Naive thymus-derived CD8-positive, alpha-beta T cell (primary cell): ENCODE measurements at regions of chr2 and their contacts with region 1.

Region 1: DNA sequence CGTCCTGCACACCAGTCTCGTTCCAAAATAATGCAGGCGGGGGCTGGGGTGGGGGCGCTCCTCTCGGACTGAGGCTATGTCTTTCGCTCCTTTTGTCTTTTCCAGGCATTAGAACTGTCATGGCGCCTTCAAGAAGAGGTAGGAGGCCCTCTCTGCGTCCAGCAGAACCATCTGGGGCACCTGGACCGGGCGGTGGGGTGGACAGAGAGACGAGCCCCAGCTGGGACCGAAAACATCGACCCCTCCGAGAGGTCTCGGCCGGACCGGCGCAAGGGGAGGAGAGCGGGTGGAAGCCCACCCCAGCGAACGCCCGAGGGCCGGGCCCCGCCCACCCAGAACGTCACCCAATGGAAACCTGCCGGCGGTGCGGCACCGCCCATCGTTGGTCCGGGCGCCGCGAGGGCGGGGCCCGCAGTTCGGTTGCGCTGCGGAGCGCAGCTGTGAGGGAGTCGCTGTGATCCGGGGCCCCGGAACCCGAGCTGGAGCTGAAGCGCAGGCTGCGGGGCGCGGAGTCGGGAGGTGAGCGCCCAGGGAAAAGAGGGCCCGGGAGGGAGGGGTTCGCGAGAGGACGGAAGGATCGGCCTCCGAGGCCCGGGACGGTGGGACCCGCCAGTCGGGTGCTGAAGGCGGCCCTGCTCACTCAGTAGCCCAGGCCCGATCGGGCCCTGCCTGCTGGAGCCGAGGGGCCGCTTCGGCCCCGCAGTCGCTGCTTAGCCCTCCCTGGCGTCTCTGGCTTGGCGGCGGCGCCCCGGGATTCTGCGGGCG is at the start of gene NRBP1:
- DNase-seq: peak; percentile 81 to 93 (median 90)
- ATAC-seq: peak; percentile 92 to 94
- H3K4me3 Mint-ChIP-seq: peak within 1 kb of the TSS; percentile 95 to 100 (median 98)
- H3K27ac Mint-ChIP-seq: peak within 1 kb of the TSS; percentile 94 to 99 (median 98)
- H3K4me1 Mint-ChIP-seq: peaks cover 22 to 45% (median 43%) of the 10 kb centered on the region in 4 donors
- H3K27me3 Mint-ChIP-seq: no peaks in the 10 kb centered on the region
- polyA plus RNA-seq, gene NRBP1: 73.4 to 107 (median 78.8) TPM

Region 2: DNA sequence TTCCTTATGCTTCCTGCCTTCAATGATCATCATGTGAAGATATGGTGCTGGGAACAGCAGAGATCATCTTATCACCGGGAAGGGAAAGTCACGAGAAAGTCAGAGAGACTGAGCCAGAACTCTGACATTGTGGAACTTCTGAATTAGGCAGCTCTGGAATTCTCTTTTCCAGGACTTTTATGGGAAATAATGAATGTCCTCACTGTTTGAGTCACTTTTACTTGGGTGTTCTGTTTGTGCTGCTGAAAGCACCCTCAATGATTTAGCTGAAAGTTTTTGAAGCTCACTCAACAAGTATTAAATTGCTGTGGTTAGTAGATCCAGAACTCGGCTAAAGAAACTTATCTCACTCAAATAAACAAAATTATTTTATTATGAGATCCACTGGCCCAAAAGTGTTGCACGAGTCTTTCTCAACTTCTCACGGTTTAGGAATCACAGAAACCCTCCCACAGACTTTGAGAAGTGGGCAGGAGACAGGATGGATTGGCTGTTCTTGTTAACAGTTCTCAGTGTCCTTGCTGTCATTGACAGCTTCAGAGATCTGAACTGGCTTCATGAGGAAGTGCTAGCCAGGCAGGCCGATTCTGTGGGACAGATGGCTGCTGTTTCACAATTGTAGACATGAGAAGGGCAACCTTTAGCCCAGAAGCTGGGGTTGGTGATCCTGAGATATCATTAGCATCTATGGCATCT is 242.9 kb before region 1 on chr2:
- POLR2A ChIA-PET with region 1: no interaction called
- DNase-seq: no peak
- ATAC-seq: no peak
- H3K4me3 Mint-ChIP-seq: no peak overlapping the region
- H3K27ac Mint-ChIP-seq: peak overlapping the region in 2 of 10 donors; percentile 62 to 65
- H3K4me1 Mint-ChIP-seq: no peaks in the 10 kb centered on the region
- H3K27me3 Mint-ChIP-seq: peaks cover 4 to 25% (median 23%) of the 10 kb centered on the region in 5 donors

Region 3: DNA sequence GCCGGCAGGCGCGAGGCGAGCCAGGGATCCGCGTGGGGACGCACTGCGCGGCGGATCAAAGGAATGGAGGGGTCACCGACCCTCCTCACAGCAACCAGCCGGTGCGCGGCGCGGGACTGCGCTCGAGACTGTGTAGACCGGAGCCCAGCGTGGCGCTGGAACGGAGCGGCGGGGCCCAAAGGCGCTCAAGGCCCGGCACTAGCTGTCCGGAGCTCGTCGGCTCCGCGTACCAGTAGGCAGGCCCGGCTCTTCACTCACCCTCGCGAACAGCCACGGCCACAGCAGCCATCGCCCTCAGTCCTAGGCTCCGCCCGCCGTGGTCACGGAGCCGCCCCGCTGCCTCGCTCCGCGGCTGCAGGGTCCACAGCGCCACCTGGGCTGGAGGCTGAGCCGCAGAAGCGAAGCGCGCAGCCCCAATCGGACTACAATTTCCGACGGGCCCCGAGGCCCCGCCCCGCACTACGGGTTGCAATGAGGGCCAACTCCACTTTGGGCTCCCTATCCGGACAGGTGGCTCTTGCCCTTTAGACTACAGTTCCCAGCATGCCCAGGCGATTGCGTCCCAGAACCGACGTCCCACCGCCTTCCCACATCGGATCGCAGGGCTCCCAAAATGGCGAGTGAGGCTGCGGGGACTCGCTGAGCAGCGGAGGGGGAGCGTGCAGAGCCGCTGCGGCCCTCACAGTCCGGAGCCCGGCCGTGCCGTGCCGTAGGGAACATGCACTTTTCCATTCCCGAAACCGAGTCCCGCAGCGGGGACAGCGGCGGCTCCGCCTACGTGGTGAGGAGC is 58.2 kb before region 1 on chr2 and contains the starts of genes EIF2B4 and SNX17:
- POLR2A ChIA-PET with region 1: interaction called, 16 read pairs
- DNase-seq: peak; percentile 96 to 99 (median 99)
- ATAC-seq: peak; percentile 91 to 93
- H3K4me3 Mint-ChIP-seq: peak within 1 kb of the TSS; percentile 84 to 100 (median 96)
- H3K27ac Mint-ChIP-seq: peak within 1 kb of the TSS; percentile 92 to 99 (median 97)
- H3K4me1 Mint-ChIP-seq: peaks cover 26 to 43% (median 42%) of the 10 kb centered on the region in 4 donors
- H3K27me3 Mint-ChIP-seq: no peaks in the 10 kb centered on the region
- polyA plus RNA-seq, gene EIF2B4: 26.4 to 41.2 (median 30.0) TPM
- polyA plus RNA-seq, gene SNX17: 200 to 217 (median 215) TPM

Region 4: GRCh38 chr2:27409321-27410073 is 18.9 kb before region 1 on chr2 and contains the start of gene PPM1G:
- POLR2A ChIA-PET with region 1: interaction called, 58 read pairs
- DNase-seq: peak; percentile 92 to 97 (median 95)
- ATAC-seq: peak; percentile 94 to 96
- H3K4me3 Mint-ChIP-seq: peak within 1 kb of the TSS; percentile 87 to 95 (median 93)
- H3K27ac Mint-ChIP-seq: peak within 1 kb of the TSS; percentile 83 to 98 (median 96)
- H3K4me1 Mint-ChIP-seq: peaks cover 19 to 43% (median 35%) of the 10 kb centered on the region in 4 donors
- H3K27me3 Mint-ChIP-seq: peaks cover 0 to 5% (median 2%) of the 10 kb centered on the region in 5 donors
- polyA plus RNA-seq, gene PPM1G: 57.1 to 85.2 (median 66.1) TPM

Region 5: DNA sequence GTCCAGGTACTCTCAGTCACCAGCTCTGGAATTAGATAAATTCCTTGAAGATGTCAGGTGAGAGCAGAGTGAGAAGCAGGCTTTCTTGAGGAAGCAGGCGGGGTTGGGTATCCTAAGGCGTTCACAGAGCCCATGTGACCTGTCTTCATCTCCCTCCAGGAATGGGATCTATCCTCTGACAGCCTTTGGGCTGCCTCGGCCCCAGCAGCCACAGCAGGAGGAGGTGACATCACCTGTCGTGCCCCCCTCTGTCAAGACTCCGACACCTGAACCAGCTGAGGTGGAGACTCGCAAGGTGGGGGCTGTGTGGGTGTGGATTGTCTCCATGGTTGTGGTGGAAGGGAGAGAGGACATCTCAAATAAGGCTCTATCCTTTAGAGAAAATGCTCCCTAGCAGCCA is 12.3 kb after region 1 on chr2:
- POLR2A ChIA-PET with region 1: interaction called, 13 read pairs
- DNase-seq: no peak
- ATAC-seq: no peak
- H3K4me3 Mint-ChIP-seq: peak overlapping the region in 1 of 10 donors; percentile 29
- H3K27ac Mint-ChIP-seq: peak overlapping the region in 3 of 10 donors; percentile 14 to 48 (median 47)
- H3K4me1 Mint-ChIP-seq: peaks cover 3 to 7% (median 6%) of the 10 kb centered on the region in 4 donors
- H3K27me3 Mint-ChIP-seq: no peaks in the 10 kb centered on the region

Region 6: DNA sequence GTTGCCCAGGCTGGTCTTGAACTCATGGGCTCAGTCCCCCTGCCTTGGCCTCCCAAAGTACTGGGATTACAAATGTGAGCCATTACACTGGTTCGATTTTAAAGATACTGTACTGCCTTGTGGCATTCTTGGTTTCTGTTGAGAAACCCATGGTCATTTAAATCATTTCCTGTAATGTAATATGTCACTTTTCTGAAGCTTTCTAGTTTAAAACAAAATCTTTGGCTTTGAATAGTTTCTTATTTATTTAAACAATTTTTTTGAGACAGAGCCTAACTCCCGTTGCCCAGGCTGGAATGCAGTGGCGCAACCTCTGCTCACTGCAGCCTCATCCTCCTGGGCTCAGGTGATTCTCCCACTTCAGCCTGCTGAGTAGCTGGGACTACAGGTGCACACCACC is 163.3 kb after region 1 on chr2:
- POLR2A ChIA-PET with region 1: no interaction called
- DNase-seq: no peak
- ATAC-seq: no peak
- H3K4me3 Mint-ChIP-seq: peak overlapping the region in 1 of 10 donors; percentile 18
- H3K27ac Mint-ChIP-seq: no peak overlapping the region
- H3K4me1 Mint-ChIP-seq: peaks cover 10 to 51% (median 31%) of the 10 kb centered on the region in 4 donors
- H3K27me3 Mint-ChIP-seq: no peaks in the 10 kb centered on the region